Heart left ventricle (tissue), 16 donors: ENCODE measurements at regions of chr4 and their contacts with region 1.

Region 1: GRCh38 chr4:66777097-66777496 is 768.2 kb downstream of the CENPC start:
- DNase-seq: no peak
- ATAC-seq: no peak
- H3K4me3 ChIP-seq: no peak overlapping the region
- H3K27ac ChIP-seq: no peak overlapping the region
- H3K4me1 ChIP-seq: no peaks in the 10 kb centered on the region
- H3K27me3 ChIP-seq: no peaks in the 10 kb centered on the region
- CTCF ChIP-seq: no peak
- POLR2A ChIP-seq: no peak

Region 2: DNA sequence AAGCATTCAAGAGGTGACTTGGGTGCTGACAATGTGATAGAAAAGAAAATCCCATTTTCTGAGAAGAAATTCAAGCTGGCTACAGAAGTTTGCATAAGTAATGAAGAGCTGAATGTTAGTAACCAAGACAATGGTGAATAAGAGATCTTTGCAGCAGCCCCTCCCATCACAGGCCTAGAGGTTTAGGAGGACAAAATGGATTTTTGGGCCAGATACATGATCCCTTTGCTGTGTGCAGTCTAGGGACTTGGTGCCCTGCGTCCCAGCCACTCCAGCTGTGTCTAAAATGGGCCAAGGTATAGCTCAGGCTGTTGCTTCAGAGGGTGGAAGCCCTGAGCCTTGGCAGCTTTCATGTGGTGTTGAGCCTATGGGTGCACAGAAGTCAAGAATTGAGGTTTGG is 999.8 kb before region 1 on chr4:
- intact Hi-C with region 1: loop called in 1 of 10 experiments (anchors 5 kb)
- DNase-seq: no peak
- ATAC-seq: no peak
- H3K4me3 ChIP-seq: no peak overlapping the region
- H3K27ac ChIP-seq: no peak overlapping the region
- H3K4me1 ChIP-seq: no peaks in the 10 kb centered on the region
- H3K27me3 ChIP-seq: no peaks in the 10 kb centered on the region
- CTCF ChIP-seq: no peak
- POLR2A ChIP-seq: no peak